ENCODE measurements at regions of chr1 and their contacts with region 1.

Region 1: DNA sequence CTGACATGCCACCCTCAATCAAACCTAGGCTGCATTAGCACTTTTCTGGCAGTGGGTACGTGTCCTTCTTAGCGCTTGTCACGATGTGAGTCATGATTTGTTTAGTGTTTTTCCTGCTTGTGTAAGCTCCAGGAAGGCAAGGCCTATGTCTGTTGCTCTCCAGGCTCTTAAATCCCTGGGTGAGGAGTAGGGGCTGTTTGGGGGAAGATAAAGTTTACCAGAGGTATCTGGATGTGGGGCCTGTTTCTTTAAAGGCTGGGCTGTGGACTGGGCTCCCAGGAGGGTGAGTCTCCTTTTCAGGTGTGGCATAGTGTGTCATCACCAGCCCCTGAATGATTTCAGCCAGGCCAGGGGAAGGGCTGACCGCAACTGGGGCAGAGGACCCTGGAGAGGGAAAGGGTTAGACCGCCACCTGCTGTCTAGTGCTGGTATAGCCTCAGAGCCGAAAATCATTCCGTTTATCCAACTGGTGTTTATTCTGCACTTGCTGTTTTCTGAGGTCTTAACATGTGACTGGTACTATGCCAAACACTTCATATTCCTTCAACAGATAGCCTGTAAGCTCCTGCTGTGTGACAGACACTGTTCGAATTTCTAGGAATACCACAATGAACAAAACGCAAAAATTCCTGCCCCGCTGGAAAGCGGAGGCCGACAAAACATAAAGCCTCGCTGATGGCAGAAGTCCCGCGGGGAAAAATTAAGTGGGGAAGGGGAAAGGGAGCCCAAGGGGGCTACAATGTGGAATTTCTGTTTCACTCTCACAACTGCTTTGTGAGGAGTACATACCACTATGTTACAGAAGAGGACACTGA is 9.7 kb downstream of the SERINC2 start:
- DNase-seq: peak; percentile 70 to 75 (median 75)
- ATAC-seq: peak; percentile 87 to 96 (median 92)
- H3K4me3 ChIP-seq: no peak overlapping the region
- H3K27ac ChIP-seq: peak overlapping the region in 1 of 3 donors; percentile 2
- H3K4me1 ChIP-seq: peaks cover 0 to 18% (median 6%) of the 10 kb centered on the region in 4 donors
- H3K27me3 ChIP-seq: no peaks in the 10 kb centered on the region
- CTCF ChIP-seq: peak; percentile 90 to 97 (median 94)
- POLR2A ChIP-seq: no peak

Region 2: GRCh38 chr1:31041529-31041928 is 381.2 kb before region 1 on chr1:
- intact Hi-C with region 1: no loop called
- DNase-seq: no peak
- ATAC-seq: no peak
- H3K4me3 ChIP-seq: no peak overlapping the region
- H3K27ac ChIP-seq: no peak overlapping the region
- H3K4me1 ChIP-seq: peaks cover 0 to 16% (median 6%) of the 10 kb centered on the region in 4 donors
- H3K27me3 ChIP-seq: no peaks in the 10 kb centered on the region
- CTCF ChIP-seq: no peak
- POLR2A ChIP-seq: no peak

Region 3: GRCh38 chr1:31394628-31395193 is 28.0 kb before region 1 on chr1:
- intact Hi-C with region 1: loop called in 1 of 2 experiments (anchors 5 kb)
- DNase-seq: peak; percentile 86 to 89 (median 87)
- ATAC-seq: peak; percentile 98 to 99 (median 99)
- H3K4me3 ChIP-seq: peak overlapping the region; percentile 28 to 42 (median 29)
- H3K27ac ChIP-seq: no peak overlapping the region
- H3K4me1 ChIP-seq: peaks cover 0 to 3% (median under 1%) of the 10 kb centered on the region in 4 donors
- H3K27me3 ChIP-seq: no peaks in the 10 kb centered on the region
- CTCF ChIP-seq: peak; percentile 83 to 93 (median 88)
- POLR2A ChIP-seq: no peak

Region 4: GRCh38 chr1:31548907-31549808 is 126.4 kb after region 1 on chr1:
- intact Hi-C with region 1: loop called in 1 of 2 experiments (anchors 10 kb)
- DNase-seq: peak; percentile 78 to 86 (median 78)
- ATAC-seq: peak; percentile 91 to 98 (median 96)
- H3K4me3 ChIP-seq: peak overlapping the region in 1 of 3 donors; percentile 32
- H3K27ac ChIP-seq: peak overlapping the region; percentile 29 to 65 (median 43)
- H3K4me1 ChIP-seq: peaks cover 0 to 16% (median 8%) of the 10 kb centered on the region in 4 donors
- H3K27me3 ChIP-seq: no peaks in the 10 kb centered on the region
- CTCF ChIP-seq: peak; percentile 96 to 99 (median 97)
- POLR2A ChIP-seq: no peak

Measured in right lobe of liver (tissue), 6 donors.